ENCODE measurements at regions of chr9 and their contacts with region 1.

Region 1: DNA sequence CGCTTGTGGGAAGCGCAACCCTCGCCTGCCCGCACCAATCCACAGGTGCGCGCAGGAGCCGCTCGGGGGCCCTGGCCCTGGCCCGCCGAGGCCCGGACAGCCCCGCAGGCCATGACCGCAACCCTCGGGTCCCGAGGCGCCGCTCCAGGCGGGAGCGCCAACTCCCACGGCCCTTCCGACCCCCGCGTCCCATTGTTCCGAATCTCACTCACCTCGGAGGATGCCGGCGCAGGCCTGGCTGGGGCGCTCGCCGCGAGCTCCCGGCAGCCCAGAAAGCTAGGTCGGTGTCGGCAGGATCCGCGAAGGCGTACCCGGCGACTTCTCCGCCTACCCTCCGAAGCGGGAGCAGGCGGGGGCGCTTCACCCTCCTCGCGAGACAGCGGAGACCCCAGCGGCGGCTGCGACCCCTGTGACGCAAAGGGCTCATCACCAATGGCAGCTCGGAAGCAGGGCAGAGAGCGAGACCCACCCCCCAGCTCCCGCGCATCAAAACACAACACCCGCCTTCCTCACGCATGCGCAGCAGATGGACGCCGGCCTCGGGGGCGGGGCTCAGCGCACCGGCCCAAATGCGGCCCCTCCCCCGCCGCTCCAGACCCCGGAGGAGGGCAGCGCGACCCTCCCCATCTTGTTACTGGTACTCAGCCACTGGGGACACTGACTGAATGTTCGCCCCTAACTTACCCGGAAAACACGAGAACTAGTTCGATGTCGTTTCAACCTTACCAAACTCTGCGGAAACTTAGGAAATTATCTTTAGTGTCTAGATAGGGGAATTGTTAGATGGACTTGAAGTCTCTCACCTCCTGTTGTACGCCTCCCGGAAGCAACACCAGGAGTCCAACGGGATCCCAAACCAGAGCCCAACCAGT is 1.3 kb upstream of the SMIM27 start:
- DNase-seq: peak; percentile 90
- H3K4me3 Mint-ChIP-seq: peak overlapping the region; percentile 91
- H3K27ac Mint-ChIP-seq: peak overlapping the region; percentile 97
- H3K4me1 Mint-ChIP-seq: peaks cover 34% of the 10 kb centered on the region
- H3K27me3 Mint-ChIP-seq: no peaks in the 10 kb centered on the region

Region 2: GRCh38 chr9:31347082-31347617 is 1203.6 kb before region 1 on chr9:
- intact Hi-C with region 1: loop called (anchors 5 kb)
- DNase-seq: no peak
- H3K4me3 Mint-ChIP-seq: peak overlapping the region; percentile 71
- H3K27ac Mint-ChIP-seq: peak overlapping the region; percentile 94
- H3K4me1 Mint-ChIP-seq: peaks cover 33% of the 10 kb centered on the region
- H3K27me3 Mint-ChIP-seq: no peaks in the 10 kb centered on the region

Region 3: GRCh38 chr9:32384364-32385151 is 166.2 kb before region 1 on chr9 and contains the start of gene ACO1:
- intact Hi-C with region 1: loop called (anchors 1 kb)
- DNase-seq: peak; percentile 82
- H3K4me3 Mint-ChIP-seq: peak within 1 kb of the TSS; percentile 80
- H3K27ac Mint-ChIP-seq: peak within 1 kb of the TSS; percentile 18
- H3K4me1 Mint-ChIP-seq: peaks cover 19% of the 10 kb centered on the region
- H3K27me3 Mint-ChIP-seq: peaks cover 28% of the 10 kb centered on the region
- total RNA-seq, gene ACO1: 11.1 and 11.8 TPM in 2 replicates

Region 4: GRCh38 chr9:32472344-32472743 is 78.5 kb before region 1 on chr9:
- intact Hi-C with region 1: no loop called
- DNase-seq: no peak
- H3K4me3 Mint-ChIP-seq: no peak overlapping the region
- H3K27ac Mint-ChIP-seq: no peak overlapping the region
- H3K4me1 Mint-ChIP-seq: peaks cover 6% of the 10 kb centered on the region
- H3K27me3 Mint-ChIP-seq: no peaks in the 10 kb centered on the region

Region 5: DNA sequence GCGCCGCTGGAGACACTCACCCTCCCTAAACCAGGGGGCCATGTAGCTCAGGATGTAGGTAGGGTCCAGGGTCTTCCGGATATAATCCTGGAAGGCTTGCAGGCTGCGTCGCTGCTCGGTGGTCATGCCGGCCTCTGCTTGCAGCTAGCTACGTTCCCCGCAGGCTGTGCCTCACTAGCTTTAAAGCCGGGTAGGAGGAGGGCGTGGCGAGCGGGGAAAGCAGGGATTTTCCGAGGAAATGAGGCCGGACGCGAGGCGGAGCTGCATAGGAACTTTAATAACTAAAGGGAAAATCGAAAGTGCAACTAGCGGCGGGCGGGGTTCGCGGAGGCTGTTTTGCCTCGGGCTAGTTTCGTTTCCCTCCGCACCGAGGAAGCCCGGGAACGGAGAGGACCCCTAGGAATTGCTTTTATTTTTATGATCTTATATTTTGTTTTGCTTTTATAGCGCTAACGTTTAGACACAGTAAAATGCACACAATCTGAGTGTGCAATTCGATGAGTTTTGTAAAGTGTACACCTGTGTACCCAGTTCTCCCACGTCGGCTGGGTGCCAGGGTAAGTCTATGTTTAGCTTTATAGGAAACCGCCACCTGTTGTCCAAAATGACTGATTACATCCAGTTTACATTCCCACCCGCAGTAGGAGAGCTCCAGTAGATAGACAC is 24.6 kb before region 1 on chr9 and contains the start of gene RIGI:
- intact Hi-C with region 1: loop called (anchors 1 kb)
- DNase-seq: peak; percentile 73
- H3K4me3 Mint-ChIP-seq: peak within 1 kb of the TSS; percentile 89
- H3K27ac Mint-ChIP-seq: peak within 1 kb of the TSS; percentile 76
- H3K4me1 Mint-ChIP-seq: peaks cover 31% of the 10 kb centered on the region
- H3K27me3 Mint-ChIP-seq: no peaks in the 10 kb centered on the region
- total RNA-seq, gene RIGI: 4.8 and 5.0 TPM in 2 replicates

Region 6: GRCh38 chr9:32571969-32572899 is 21.4 kb after region 1 on chr9:
- intact Hi-C with region 1: loop called (anchors 1 kb)
- DNase-seq: peak; percentile 64
- H3K4me3 Mint-ChIP-seq: peak overlapping the region; percentile 97
- H3K27ac Mint-ChIP-seq: peak overlapping the region; percentile 97
- H3K4me1 Mint-ChIP-seq: peaks cover 23% of the 10 kb centered on the region
- H3K27me3 Mint-ChIP-seq: peaks cover 4% of the 10 kb centered on the region

Region 7: DNA sequence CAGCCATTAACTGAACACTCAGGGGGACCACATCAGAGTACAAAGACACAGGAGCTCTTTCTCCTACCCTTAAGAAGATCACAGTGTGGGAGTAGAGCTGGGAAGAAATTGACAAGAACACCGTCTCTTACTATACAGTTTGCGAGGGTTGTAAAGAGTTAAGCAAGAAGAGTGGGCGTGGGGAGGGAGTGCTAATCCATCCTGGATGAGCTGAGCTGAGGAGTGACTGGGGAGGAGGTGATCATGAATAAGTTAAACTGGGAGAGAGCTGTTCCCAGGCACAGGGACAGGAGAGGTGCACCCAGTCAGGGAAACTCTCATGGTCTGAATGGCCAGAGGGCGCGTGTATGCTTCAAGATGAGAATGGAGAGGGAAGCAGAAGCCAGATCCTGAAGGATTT is 67.5 kb after region 1 on chr9:
- intact Hi-C with region 1: no loop called
- DNase-seq: no peak
- H3K4me3 Mint-ChIP-seq: no peak overlapping the region
- H3K27ac Mint-ChIP-seq: no peak overlapping the region
- H3K4me1 Mint-ChIP-seq: no peaks in the 10 kb centered on the region
- H3K27me3 Mint-ChIP-seq: peaks cover 7% of the 10 kb centered on the region

Region 8: GRCh38 chr9:32672461-32672860 is 121.7 kb after region 1 on chr9:
- intact Hi-C with region 1: no loop called
- DNase-seq: no peak
- H3K4me3 Mint-ChIP-seq: no peak overlapping the region
- H3K27ac Mint-ChIP-seq: no peak overlapping the region
- H3K4me1 Mint-ChIP-seq: no peaks in the 10 kb centered on the region
- H3K27me3 Mint-ChIP-seq: no peaks in the 10 kb centered on the region

Region 9: GRCh38 chr9:33024966-33025571 is 474.3 kb after region 1 on chr9 and contains the start of gene DNAJA1:
- intact Hi-C with region 1: loop called (anchors 1 kb)
- DNase-seq: peak; percentile 93
- H3K4me3 Mint-ChIP-seq: peak within 1 kb of the TSS; percentile 90
- H3K27ac Mint-ChIP-seq: peak within 1 kb of the TSS; percentile 96
- H3K4me1 Mint-ChIP-seq: peaks cover 53% of the 10 kb centered on the region
- H3K27me3 Mint-ChIP-seq: no peaks in the 10 kb centered on the region
- total RNA-seq, gene DNAJA1: 257 and 259 TPM in 2 replicates